ENCODE measurements at regions of chr2 and their contacts with region 1.

Region 1: GRCh38 chr2:74482801-74483674 is at the starts of genes CCDC142 and TTC31:
- DNase-seq: peak; percentile 83
- ATAC-seq: peak; percentile 92
- H3K4me3 Mint-ChIP-seq: peak within 1 kb of the TSS; percentile 100
- H3K27ac Mint-ChIP-seq: peak within 1 kb of the TSS; percentile 100
- H3K4me1 Mint-ChIP-seq: peaks cover 30% of the 10 kb centered on the region
- H3K27me3 Mint-ChIP-seq: no peaks in the 10 kb centered on the region
- CTCF ChIP-seq: peak; percentile 23
- total RNA-seq, gene CCDC142: 29.3 and 40.4 TPM in 2 replicates
- total RNA-seq, gene TTC31: 41.9 and 49.1 TPM in 2 replicates

Region 2: DNA sequence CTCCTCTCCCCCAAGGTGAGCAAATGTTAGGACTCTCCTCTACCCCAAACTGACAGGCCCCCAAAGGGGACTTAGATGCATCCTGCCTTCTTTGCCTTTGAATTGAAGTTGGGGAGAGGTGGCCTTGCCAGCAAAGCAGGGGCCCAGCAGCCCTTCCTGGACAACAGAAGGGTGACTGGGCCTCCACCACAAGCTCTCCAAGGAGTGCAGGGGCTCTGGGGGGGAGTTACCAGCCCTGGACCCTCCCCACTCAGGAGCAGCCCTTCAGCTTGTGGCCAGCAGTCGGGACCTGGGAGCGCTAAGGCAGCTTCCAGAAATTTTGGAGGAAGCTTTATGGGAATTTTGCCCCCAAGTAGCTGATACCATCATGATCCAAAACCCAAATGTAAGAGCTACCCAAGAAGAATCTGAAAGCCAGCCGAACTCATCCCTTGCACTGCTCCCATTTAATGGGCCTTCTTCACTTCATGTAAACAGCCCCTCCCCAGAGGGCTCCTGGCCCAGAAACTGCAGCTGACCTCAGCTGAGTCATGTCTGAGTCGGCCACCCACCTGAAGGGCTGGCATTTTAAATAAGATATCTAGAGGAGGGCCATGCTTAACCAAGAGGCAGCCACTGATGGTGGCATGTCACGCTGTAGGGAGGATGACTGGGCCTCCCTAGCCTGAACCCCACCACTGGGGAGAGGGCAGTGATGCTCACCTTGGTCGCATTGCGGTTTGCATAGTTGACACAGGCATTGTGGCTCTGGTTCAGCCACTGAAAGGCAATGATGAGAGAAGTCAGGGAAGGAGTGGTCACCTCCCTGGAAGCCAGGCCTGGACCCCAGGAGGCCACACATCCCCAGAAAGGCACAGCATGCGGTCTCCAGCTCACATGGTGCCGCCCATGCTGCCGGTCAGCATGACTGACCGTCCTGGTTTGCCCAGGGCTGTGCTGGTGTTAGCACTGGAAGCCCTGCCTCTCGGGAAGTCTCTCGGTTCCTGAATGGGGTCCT is 1483.0 kb before region 1 on chr2:
- CTCF ChIA-PET with region 1: no interaction called
- POLR2A ChIA-PET with region 1: no interaction called
- intact Hi-C with region 1: no loop called
- DNase-seq: peak; percentile 9
- ATAC-seq: no peak
- H3K4me3 Mint-ChIP-seq: no peak overlapping the region
- H3K27ac Mint-ChIP-seq: no peak overlapping the region
- H3K4me1 Mint-ChIP-seq: no peaks in the 10 kb centered on the region
- H3K27me3 Mint-ChIP-seq: no peaks in the 10 kb centered on the region
- CTCF ChIP-seq: no peak

Region 3: GRCh38 chr2:74155830-74156229 is 327.2 kb before region 1 on chr2:
- CTCF ChIA-PET with region 1: no interaction called
- POLR2A ChIA-PET with region 1: no interaction called
- intact Hi-C with region 1: no loop called
- DNase-seq: no peak
- ATAC-seq: no peak
- H3K4me3 Mint-ChIP-seq: no peak overlapping the region
- H3K27ac Mint-ChIP-seq: no peak overlapping the region
- H3K4me1 Mint-ChIP-seq: peaks cover 15% of the 10 kb centered on the region
- H3K27me3 Mint-ChIP-seq: no peaks in the 10 kb centered on the region
- CTCF ChIP-seq: no peak

Region 4: GRCh38 chr2:74391580-74392448 is 91.2 kb before region 1 on chr2:
- CTCF ChIA-PET with region 1: interaction called, 5 read pairs
- POLR2A ChIA-PET with region 1: no interaction called
- intact Hi-C with region 1: loop called (anchors 1 kb)
- DNase-seq: peak; percentile 94
- ATAC-seq: peak; percentile 89
- H3K4me3 Mint-ChIP-seq: peak overlapping the region; percentile 96
- H3K27ac Mint-ChIP-seq: peak overlapping the region; percentile 99
- H3K4me1 Mint-ChIP-seq: peaks cover 6% of the 10 kb centered on the region
- H3K27me3 Mint-ChIP-seq: peaks cover 4% of the 10 kb centered on the region
- CTCF ChIP-seq: peak; percentile 93

Region 5: GRCh38 chr2:74440378-74441169 is 42.5 kb before region 1 on chr2:
- CTCF ChIA-PET with region 1: no interaction called
- POLR2A ChIA-PET with region 1: interaction called, 3 read pairs
- intact Hi-C with region 1: loop called (anchors 1 kb)
- DNase-seq: peak; percentile 73
- ATAC-seq: peak; percentile 94
- H3K4me3 Mint-ChIP-seq: peak overlapping the region; percentile 79
- H3K27ac Mint-ChIP-seq: no peak overlapping the region
- H3K4me1 Mint-ChIP-seq: peaks cover 53% of the 10 kb centered on the region
- H3K27me3 Mint-ChIP-seq: peaks cover 18% of the 10 kb centered on the region
- CTCF ChIP-seq: no peak

Region 6: GRCh38 chr2:74472086-74472944 is 10.7 kb before region 1 on chr2 and contains the start of gene MRPL53:
- CTCF ChIA-PET with region 1: interaction called, 15 read pairs
- POLR2A ChIA-PET with region 1: interaction called, 78 read pairs
- intact Hi-C with region 1: loop called (anchors 1 kb)
- DNase-seq: peak; percentile 91
- ATAC-seq: peak; percentile 89
- H3K4me3 Mint-ChIP-seq: peak within 1 kb of the TSS; percentile 97
- H3K27ac Mint-ChIP-seq: peak within 1 kb of the TSS; percentile 97
- H3K4me1 Mint-ChIP-seq: peaks cover 23% of the 10 kb centered on the region
- H3K27me3 Mint-ChIP-seq: no peaks in the 10 kb centered on the region
- CTCF ChIP-seq: no peak
- total RNA-seq, gene MRPL53: 86.9 and 98.8 TPM in 2 replicates

Region 7: DNA sequence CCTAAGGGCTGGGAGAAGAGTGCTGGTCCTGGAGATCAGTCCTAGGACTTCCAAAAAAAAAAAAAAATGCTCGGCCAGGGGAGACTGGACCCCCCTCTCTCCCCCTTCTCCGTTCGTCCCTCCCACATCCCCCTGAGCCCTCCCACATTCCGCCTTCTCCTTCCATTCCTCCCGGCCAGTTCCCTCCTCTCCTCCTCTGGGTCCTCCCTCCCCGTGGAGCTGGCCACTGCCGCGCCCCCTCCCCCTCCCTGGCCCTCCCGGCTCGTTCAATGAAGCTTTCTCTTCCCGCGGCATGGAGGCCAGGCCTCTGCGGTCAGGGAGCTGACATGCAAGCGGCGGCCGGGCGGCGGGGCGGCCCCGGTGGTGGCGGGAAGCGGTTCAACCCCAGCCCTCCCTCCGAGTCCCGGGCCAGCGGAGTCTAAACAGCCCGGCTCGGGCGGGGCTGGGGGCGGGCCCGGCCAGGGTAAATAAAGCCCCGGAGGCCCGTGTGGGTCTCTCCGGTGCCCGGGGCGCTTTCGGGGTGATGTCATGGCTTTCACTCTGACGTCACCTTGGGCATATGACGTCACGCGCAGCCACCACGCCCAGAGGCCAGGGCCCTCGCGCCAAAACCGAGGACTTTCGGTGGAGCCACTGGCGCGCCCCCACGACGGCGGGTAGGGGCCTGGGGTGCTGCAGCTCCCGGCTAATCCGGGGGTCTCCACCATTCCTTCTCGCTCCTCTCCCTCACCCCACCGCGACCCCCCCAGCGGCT is 71.0 kb after region 1 on chr2 and contains the start of gene LOXL3:
- CTCF ChIA-PET with region 1: no interaction called
- POLR2A ChIA-PET with region 1: interaction called, 10 read pairs
- intact Hi-C with region 1: loop called (anchors 1 kb)
- DNase-seq: peak; percentile 83
- ATAC-seq: peak; percentile 51
- H3K4me3 Mint-ChIP-seq: peak within 1 kb of the TSS; percentile 97
- H3K27ac Mint-ChIP-seq: peak within 1 kb of the TSS; percentile 90
- H3K4me1 Mint-ChIP-seq: peaks cover 32% of the 10 kb centered on the region
- H3K27me3 Mint-ChIP-seq: peaks cover 7% of the 10 kb centered on the region
- CTCF ChIP-seq: no peak
- total RNA-seq, gene LOXL3: 1.4 and 2.3 TPM in 2 replicates

Region 8: GRCh38 chr2:74587664-74588277 is 104.7 kb after region 1 on chr2:
- CTCF ChIA-PET with region 1: interaction called, 85 read pairs
- POLR2A ChIA-PET with region 1: interaction called, 24 read pairs
- intact Hi-C with region 1: loop called (anchors 1 kb)
- DNase-seq: peak; percentile 43
- ATAC-seq: peak; percentile 96
- H3K4me3 Mint-ChIP-seq: no peak overlapping the region
- H3K27ac Mint-ChIP-seq: no peak overlapping the region
- H3K4me1 Mint-ChIP-seq: peaks cover 8% of the 10 kb centered on the region
- H3K27me3 Mint-ChIP-seq: peaks cover 4% of the 10 kb centered on the region
- CTCF ChIP-seq: no peak

Region 9: GRCh38 chr2:75108937-75109482 is 626.0 kb after region 1 on chr2:
- CTCF ChIA-PET with region 1: no interaction called
- POLR2A ChIA-PET with region 1: no interaction called
- intact Hi-C with region 1: no loop called
- DNase-seq: no peak
- ATAC-seq: no peak
- H3K4me3 Mint-ChIP-seq: no peak overlapping the region
- H3K27ac Mint-ChIP-seq: no peak overlapping the region
- H3K4me1 Mint-ChIP-seq: no peaks in the 10 kb centered on the region
- H3K27me3 Mint-ChIP-seq: no peaks in the 10 kb centered on the region
- CTCF ChIP-seq: no peak

Region 10: GRCh38 chr2:75276093-75277055 is 793.3 kb after region 1 on chr2:
- CTCF ChIA-PET with region 1: no interaction called
- POLR2A ChIA-PET with region 1: no interaction called
- intact Hi-C with region 1: no loop called
- DNase-seq: no peak
- ATAC-seq: no peak
- H3K4me3 Mint-ChIP-seq: no peak overlapping the region
- H3K27ac Mint-ChIP-seq: no peak overlapping the region
- H3K4me1 Mint-ChIP-seq: no peaks in the 10 kb centered on the region
- H3K27me3 Mint-ChIP-seq: no peaks in the 10 kb centered on the region
- CTCF ChIP-seq: no peak